Naive thymus-derived CD8-positive, alpha-beta T cell (primary cell): ENCODE measurements at regions of chr6 and their contacts with region 1.

Region 1: DNA sequence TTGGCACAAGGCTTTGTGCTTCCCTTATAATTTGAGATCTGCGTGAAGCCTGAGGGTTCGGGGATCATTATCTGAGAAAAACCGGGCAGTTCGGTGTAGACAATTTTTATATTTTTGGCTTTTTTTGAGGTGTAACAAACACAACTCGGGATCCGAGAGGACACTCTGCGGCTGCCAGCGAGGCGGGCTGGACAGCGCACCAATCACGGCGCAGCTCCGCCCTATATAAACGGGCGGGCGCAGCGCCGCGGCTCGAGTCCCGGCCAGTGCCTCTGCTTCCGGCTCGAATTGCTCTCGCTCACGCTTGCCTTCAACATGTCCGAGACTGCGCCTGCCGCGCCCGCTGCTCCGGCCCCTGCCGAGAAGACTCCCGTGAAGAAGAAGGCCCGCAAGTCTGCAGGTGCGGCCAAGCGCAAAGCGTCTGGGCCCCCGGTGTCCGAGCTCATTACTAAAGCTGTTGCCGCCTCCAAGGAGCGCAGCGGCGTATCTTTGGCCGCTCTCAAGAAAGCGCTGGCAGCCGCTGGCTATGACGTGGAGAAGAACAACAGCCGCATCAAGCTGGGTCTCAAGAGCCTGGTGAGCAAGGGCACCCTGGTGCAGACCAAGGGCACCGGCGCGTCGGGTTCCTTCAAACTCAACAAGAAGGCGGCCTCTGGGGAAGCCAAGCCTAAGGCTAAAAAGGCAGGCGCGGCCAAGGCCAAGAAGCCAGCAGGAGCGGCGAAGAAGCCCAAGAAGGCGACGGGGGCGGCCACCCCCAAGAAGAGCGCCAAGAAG is 69.0 kb downstream of the HFE start:
- DNase-seq: peak; percentile 73 to 96 (median 88)
- ATAC-seq: peak; percentile 48 to 58
- H3K4me3 Mint-ChIP-seq: peak overlapping the region; percentile 89 to 99 (median 96)
- H3K27ac Mint-ChIP-seq: peak overlapping the region; percentile 92 to 100 (median 98)
- H3K4me1 Mint-ChIP-seq: peaks cover 24 to 44% (median 39%) of the 10 kb centered on the region in 4 donors
- H3K27me3 Mint-ChIP-seq: no peaks in the 10 kb centered on the region

Region 2: GRCh38 chr6:25992413-25993037 is 163.7 kb before region 1 on chr6:
- POLR2A ChIA-PET with region 1: no interaction called
- DNase-seq: peak; percentile 82 to 95 (median 94)
- ATAC-seq: peak; percentile 91 to 92
- H3K4me3 Mint-ChIP-seq: peak overlapping the region; percentile 93 to 98 (median 96)
- H3K27ac Mint-ChIP-seq: peak overlapping the region; percentile 91 to 98 (median 96)
- H3K4me1 Mint-ChIP-seq: peaks cover 8 to 39% (median 22%) of the 10 kb centered on the region in 4 donors
- H3K27me3 Mint-ChIP-seq: no peaks in the 10 kb centered on the region

Region 3: DNA sequence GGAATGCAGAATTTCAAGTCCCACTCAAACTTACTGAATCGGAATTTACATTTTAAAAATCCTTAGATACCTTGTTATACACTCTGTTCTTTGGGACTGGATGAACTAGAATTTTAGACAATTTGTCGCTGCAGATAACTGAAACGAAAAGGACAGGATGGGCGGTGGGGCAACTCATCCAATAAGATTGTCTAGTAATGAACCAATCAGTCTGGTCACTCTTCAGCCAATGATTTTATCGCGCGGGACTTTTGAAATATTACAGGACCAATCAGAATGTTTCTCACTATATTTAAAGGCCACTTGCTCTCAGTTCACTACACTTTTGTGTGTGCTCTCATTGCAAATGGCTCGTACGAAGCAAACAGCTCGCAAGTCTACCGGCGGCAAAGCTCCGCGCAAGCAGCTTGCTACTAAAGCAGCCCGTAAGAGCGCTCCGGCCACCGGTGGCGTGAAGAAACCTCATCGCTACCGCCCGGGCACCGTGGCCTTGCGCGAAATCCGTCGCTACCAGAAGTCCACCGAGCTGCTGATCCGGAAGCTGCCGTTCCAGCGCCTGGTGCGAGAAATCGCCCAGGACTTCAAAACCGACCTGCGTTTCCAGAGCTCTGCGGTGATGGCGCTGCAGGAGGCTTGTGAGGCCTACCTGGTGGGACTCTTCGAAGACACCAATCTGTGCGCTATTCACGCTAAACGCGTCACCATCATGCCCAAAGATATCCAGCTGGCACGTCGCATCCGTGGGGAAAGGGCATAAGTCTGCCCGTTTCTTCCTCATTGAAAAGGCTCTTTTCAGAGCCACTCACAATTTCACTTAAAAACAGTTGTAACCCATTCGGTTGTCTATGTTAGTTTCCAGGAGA is 111.0 kb before region 1 on chr6:
- POLR2A ChIA-PET with region 1: interaction called, 109 read pairs
- DNase-seq: peak; percentile 45 to 95 (median 86)
- ATAC-seq: peak; percentile 58 to 63
- H3K4me3 Mint-ChIP-seq: peak overlapping the region; percentile 90 to 97 (median 92)
- H3K27ac Mint-ChIP-seq: peak overlapping the region; percentile 90 to 99 (median 96)
- H3K4me1 Mint-ChIP-seq: peaks cover 8 to 28% (median 14%) of the 10 kb centered on the region in 4 donors
- H3K27me3 Mint-ChIP-seq: no peaks in the 10 kb centered on the region

Region 4: GRCh38 chr6:26136321-26136720 is 19.9 kb before region 1 on chr6:
- POLR2A ChIA-PET with region 1: interaction called, 1,613 read pairs
- DNase-seq: no peak
- ATAC-seq: no peak
- H3K4me3 Mint-ChIP-seq: no peak overlapping the region
- H3K27ac Mint-ChIP-seq: peak overlapping the region in 4 of 10 donors; percentile 18 to 80 (median 68)
- H3K4me1 Mint-ChIP-seq: peaks cover 16 to 40% (median 37%) of the 10 kb centered on the region in 4 donors
- H3K27me3 Mint-ChIP-seq: no peaks in the 10 kb centered on the region

Region 5: GRCh38 chr6:26204332-26205165 is 48.3 kb after region 1 on chr6:
- POLR2A ChIA-PET with region 1: interaction called, 616 read pairs
- DNase-seq: peak; percentile 69 to 97 (median 88)
- ATAC-seq: peak; percentile 68 to 71
- H3K4me3 Mint-ChIP-seq: no peak overlapping the region
- H3K27ac Mint-ChIP-seq: no peak overlapping the region
- H3K4me1 Mint-ChIP-seq: peaks cover 14 to 36% (median 26%) of the 10 kb centered on the region in 4 donors
- H3K27me3 Mint-ChIP-seq: peaks cover 0 to 4% (median 0%) of the 10 kb centered on the region in 5 donors

Region 6: DNA sequence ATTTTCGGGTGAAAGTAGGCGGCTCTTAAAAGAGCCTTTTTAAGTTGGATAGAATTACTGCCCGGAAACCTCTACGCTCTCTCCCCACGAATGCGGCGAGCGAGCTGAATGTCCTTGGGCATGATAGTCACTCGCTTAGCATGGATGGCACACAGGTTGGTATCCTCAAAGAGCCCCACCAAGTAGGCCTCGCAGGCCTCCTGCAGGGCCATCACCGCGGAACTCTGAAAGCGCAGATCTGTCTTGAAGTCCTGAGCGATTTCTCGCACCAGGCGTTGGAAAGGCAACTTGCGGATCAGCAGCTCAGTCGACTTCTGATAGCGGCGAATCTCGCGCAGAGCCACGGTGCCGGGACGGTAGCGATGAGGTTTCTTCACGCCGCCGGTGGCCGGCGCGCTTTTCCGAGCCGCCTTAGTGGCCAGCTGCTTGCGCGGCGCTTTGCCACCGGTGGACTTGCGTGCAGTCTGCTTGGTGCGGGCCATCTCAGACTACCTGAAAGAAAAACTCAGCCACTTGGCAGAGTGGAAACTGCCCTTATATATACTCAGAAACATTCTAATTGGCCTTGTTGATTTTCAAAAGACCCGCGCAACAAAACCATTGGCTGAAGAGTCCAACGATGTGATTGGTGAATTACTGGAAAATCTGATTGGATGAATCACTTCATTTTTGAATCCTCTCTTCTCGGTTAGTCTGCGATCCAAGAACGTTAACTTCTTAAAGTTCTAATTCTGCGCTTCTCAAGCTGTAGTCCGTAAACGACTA is 114.8 kb after region 1 on chr6:
- POLR2A ChIA-PET with region 1: interaction called, 122 read pairs
- DNase-seq: peak; percentile 52 to 93 (median 81)
- ATAC-seq: peak; percentile 18 to 39
- H3K4me3 Mint-ChIP-seq: no peak overlapping the region
- H3K27ac Mint-ChIP-seq: peak overlapping the region in 4 of 10 donors; percentile 20 to 97 (median 40)
- H3K4me1 Mint-ChIP-seq: peaks cover 4 to 28% (median 11%) of the 10 kb centered on the region in 4 donors
- H3K27me3 Mint-ChIP-seq: no peaks in the 10 kb centered on the region

Region 7: DNA sequence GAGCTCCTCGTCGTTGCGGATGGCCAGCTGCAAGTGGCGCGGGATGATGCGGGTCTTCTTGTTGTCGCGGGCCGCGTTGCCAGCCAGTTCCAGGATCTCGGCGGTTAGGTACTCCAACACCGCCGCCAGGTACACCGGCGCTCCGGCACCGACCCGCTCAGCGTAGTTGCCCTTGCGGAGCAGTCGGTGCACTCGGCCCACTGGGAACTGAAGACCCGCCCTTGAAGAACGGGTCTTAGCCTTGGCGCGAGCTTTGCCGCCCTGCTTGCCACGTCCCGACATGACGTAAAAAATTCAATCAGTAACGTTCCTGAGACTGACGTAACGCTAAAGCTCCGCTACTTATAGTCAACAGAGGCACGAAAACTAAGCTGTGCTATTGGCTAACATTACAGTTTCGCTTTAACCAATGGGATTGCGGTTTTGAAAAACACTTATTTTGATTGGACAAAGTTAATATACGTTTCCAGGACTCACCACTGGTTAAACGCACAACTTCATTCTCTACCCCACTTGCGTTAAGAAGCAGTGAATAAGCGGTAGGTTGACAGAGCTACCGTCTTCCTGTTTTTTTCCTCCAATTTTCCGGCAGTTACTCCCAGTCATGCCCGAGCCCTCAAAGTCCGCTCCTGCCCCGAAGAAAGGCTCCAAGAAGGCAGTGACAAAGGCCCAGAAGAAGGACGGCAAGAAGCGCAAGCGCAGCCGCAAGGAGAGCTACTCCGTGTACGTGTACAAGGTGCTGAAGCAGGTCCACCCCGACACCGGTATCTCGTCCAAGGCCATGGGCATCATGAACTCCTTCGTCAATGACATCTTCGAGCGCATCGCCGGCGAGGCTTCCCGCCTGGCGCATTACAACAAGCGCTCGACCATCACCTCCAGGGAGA is 1682.0 kb after region 1 on chr6:
- POLR2A ChIA-PET with region 1: interaction called, 55 read pairs
- DNase-seq: peak; percentile 63 to 95 (median 88)
- ATAC-seq: peak; percentile 78 to 81
- H3K4me3 Mint-ChIP-seq: no peak overlapping the region
- H3K27ac Mint-ChIP-seq: no peak overlapping the region
- H3K4me1 Mint-ChIP-seq: peaks cover 8 to 36% (median 18%) of the 10 kb centered on the region in 4 donors
- H3K27me3 Mint-ChIP-seq: peaks cover 0 to 8% (median 0%) of the 10 kb centered on the region in 5 donors